Activated T-helper 2 cell treated with anti-CD3 and anti-CD28 coated beads, Interferon-gamma antibody, Interleukin-2, Interleukin-4, amounts not matched to agents 10 μg/mL and 5 μg/mL and 100 μg/mL, durations not matched to agents 14 hours and 24 hours and 36 hours (primary cell): ENCODE measurements at regions of chrX and their contacts with region 1.

Region 1: DNA sequence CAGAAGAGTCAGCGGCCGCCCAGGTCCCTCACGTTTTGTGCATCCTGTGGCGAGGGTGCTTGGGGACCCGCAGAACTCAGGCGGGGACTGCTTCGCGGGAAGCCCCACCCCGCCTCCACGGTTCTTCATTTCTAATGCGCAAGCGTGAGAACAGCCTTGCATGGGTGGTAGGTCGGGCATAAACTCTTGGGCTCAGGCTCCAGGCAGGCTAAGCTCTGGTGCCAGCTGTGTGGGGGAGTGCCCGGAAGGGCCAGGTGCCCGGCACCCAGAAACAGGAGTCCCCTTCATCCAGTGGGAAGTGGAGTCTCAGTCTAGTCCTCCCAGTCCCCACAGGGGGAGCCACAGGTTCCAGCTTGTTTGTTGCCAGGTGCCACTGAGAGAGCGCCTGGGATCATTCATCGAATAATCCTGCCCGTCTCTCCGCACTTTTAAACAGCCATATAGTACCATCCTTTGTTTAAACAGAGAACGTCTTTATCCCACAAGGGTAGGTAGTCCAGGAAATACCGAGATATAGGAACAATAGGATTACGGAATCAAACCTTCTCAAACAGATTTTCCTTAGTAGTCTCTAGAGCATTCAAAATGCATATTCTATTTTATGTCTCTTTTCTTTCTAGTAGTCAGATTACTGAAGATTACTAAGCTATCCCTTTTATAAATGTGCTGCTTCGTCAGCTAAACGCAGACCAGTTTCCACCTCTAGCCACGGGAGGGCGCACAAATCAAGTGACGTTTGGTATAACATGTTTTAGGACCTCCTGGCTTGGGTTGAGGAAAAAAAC is 12.7 kb upstream of the RBBP7 start:
- DNase-seq: peak; percentile 46
- H3K4me3 Mint-ChIP-seq: peak overlapping the region; percentile 74
- H3K27ac Mint-ChIP-seq: no peak overlapping the region
- H3K4me1 Mint-ChIP-seq: peaks cover 8% of the 10 kb centered on the region
- H3K27me3 Mint-ChIP-seq: peaks cover 10% of the 10 kb centered on the region

Region 2: DNA sequence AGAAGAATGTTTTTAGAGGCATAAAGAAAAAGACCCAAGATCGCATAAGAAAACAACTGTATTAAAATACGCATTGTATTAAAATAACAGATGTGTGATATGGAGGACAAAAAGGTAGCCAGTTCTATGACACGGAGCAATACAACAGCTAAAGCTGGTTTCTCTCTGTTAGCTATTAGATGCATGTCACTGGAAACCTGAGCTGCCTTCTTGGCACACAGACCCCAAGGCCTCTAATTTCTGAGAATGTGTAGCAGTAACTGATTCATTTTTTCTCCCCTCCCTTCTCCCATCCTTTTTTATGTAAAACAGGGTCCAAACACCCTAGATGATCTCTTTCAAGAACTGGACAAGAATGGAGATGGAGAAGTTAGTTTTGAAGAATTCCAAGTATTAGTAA is 228.8 kb before region 1 on chrX:
- intact Hi-C with region 1: no loop called
- DNase-seq: no peak
- H3K4me3 Mint-ChIP-seq: no peak overlapping the region
- H3K27ac Mint-ChIP-seq: no peak overlapping the region
- H3K4me1 Mint-ChIP-seq: no peaks in the 10 kb centered on the region
- H3K27me3 Mint-ChIP-seq: no peaks in the 10 kb centered on the region

Region 3: DNA sequence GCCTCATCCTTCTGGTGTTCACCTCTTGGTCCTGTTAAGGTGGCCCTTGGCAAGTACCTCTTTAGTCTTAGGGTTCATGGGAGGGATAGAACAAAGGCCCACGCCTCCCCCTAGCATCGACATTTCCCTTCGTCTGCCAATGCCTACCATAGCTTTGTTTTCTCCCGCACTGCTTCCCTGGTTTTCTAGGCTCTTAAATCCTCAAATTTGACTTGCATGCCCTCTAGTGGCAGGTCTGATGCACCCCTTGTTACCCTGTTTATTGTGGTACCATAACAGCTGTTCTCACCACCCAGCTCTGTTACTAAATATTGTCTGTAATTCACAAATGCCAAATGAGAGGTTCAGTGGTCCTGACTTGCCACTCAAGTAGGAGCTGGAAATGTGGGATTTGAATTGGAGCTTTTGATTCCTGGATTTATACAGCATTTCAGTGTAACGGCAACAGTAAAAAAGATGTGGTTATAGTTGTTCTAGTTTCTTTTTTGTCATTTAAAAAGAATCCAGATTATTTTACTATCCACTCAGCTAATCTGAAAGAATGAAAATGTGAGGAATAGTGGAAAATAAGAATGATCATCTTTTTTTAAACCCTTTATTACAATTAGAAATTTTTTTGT is 163.7 kb after region 1 on chrX:
- intact Hi-C with region 1: loop called (anchors 1 kb)
- DNase-seq: peak; percentile 8
- H3K4me3 Mint-ChIP-seq: no peak overlapping the region
- H3K27ac Mint-ChIP-seq: no peak overlapping the region
- H3K4me1 Mint-ChIP-seq: peaks cover 2% of the 10 kb centered on the region
- H3K27me3 Mint-ChIP-seq: peaks cover 2% of the 10 kb centered on the region